ENCODE measurements at regions of chr19 and their contacts with region 1.

Region 1: GRCh38 chr19:4524808-4525562 is 6.7 kb upstream of the PLIN4 start:
- DNase-seq: peak; percentile 8
- ATAC-seq: peak; percentile 88
- H3K4me3 ChIP-seq: no peak overlapping the region
- H3K27ac ChIP-seq: no peak overlapping the region
- H3K4me1 ChIP-seq: peaks cover 0 to 7% of the 10 kb centered on the region in 2 experiments; a peak in 1 of 4 replicates
- H3K27me3 ChIP-seq: no peaks in the 10 kb centered on the region
- CTCF ChIP-seq: peak; percentile 48 to 96 (median 83); a peak in 5 of 6 replicates
- POLR2A ChIP-seq: no peak
- RAD21 ChIP-seq: peak; percentile 50

Region 2: DNA sequence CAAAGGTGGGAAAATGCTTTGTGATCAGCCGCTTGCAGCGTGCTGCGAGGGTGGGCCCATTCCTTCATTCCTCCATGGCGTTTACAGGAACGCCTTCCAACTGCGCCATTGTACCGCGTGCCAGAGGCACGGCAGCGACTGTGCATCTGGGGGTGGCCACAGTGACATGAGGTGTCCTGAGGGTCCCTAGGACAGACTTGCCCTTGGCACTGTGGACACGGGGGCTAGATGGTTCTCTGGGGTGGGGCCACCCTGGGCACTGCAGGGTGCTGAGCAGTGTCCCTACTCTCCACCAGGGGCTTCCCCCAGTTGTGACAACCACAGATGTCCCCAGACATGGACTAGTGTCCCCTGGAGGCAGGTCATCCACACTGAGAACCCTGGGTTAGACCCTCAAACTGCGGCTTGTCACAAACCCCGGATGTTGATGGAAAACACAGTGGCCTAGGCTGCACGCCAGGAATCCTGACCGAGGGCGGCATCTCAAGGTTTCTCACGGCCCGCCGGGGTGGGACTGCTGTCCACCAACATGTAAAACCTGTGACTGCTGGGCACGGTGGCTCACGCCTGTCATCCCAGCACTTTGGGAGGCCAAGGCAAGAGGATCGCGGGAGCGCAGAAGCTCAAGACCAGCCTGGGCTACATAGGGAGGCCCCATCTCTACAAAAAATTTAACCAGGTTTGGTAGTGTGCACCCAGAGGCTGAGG is 18.1 kb before region 1 on chr19:
- CTCF ChIA-PET with region 1: interaction called, 12 read pairs
- POLR2A ChIA-PET with region 1: no interaction called
- RAD21 ChIA-PET with region 1: no interaction called
- intact Hi-C with region 1: no loop called
- DNase-seq: no peak
- ATAC-seq: peak; percentile 51
- H3K4me3 ChIP-seq: no peak overlapping the region
- H3K27ac ChIP-seq: no peak overlapping the region
- H3K4me1 ChIP-seq: peaks cover 0 to 11% of the 10 kb centered on the region in 2 experiments; a peak in 2 of 4 replicates
- H3K27me3 ChIP-seq: no peaks in the 10 kb centered on the region
- CTCF ChIP-seq: peak in 1 of 3 experiments; percentile 14; a peak in 1 of 6 replicates
- POLR2A ChIP-seq: no peak
- RAD21 ChIP-seq: no peak

Region 3: GRCh38 chr19:4534836-4535658 is 10.1 kb after region 1 on chr19 and contains the start of gene PLIN5:
- CTCF ChIA-PET with region 1: interaction called, 76 read pairs
- POLR2A ChIA-PET with region 1: interaction called, 8 read pairs
- RAD21 ChIA-PET with region 1: interaction called in 1 of 2 experiments, 3 read pairs
- intact Hi-C with region 1: no loop called
- DNase-seq: peak; percentile 65
- ATAC-seq: peak; percentile 96
- H3K4me3 ChIP-seq: peak within 1 kb of the TSS; percentile 50 to 62
- H3K27ac ChIP-seq: peak within 1 kb of the TSS; percentile 7; the same call in 1 of the 2 replicates
- H3K4me1 ChIP-seq: peaks cover 12 to 30% of the 10 kb centered on the region in 2 experiments; a peak in 3 of 4 replicates
- H3K27me3 ChIP-seq: no peaks in the 10 kb centered on the region
- CTCF ChIP-seq: no peak
- POLR2A ChIP-seq: no peak
- RAD21 ChIP-seq: no peak
- total RNA-seq, gene PLIN5: 8.1 TPM

Region 4: GRCh38 chr19:4867534-4868285 is 342.7 kb after region 1 on chr19 and contains the start of gene PLIN3:
- CTCF ChIA-PET with region 1: no interaction called
- POLR2A ChIA-PET with region 1: no interaction called
- RAD21 ChIA-PET with region 1: no interaction called
- intact Hi-C with region 1: no loop called
- DNase-seq: peak; percentile 88
- ATAC-seq: peak; percentile 72
- H3K4me3 ChIP-seq: peak within 1 kb of the TSS; percentile 94 to 96
- H3K27ac ChIP-seq: peak within 1 kb of the TSS; percentile 95
- H3K4me1 ChIP-seq: peaks cover 49 to 76% of the 10 kb centered on the region in 2 experiments
- H3K27me3 ChIP-seq: no peaks in the 10 kb centered on the region
- CTCF ChIP-seq: no peak
- POLR2A ChIP-seq: no peak
- RAD21 ChIP-seq: no peak
- total RNA-seq, gene PLIN3: 207 TPM